HCT116 (cell line): ENCODE measurements at regions of chr9 and their contacts with region 1.

Region 1: GRCh38 chr9:17330097-17330496 is 195.3 kb downstream of the CNTLN start:
- DNase-seq: no peak
- ATAC-seq: no peak
- H3K4me3 ChIP-seq: no peak overlapping the region
- H3K27ac ChIP-seq: no peak overlapping the region
- H3K4me1 ChIP-seq: no peaks in the 10 kb centered on the region
- H3K27me3 ChIP-seq: no peaks in the 10 kb centered on the region
- CTCF ChIP-seq: no peak
- POLR2A ChIP-seq: no peak
- RAD21 ChIP-seq: no peak

Region 2: GRCh38 chr9:17272536-17272935 is 57.6 kb before region 1 on chr9:
- CTCF ChIA-PET with region 1: no interaction called
- POLR2A ChIA-PET with region 1: no interaction called
- RAD21 ChIA-PET with region 1: no interaction called
- intact Hi-C with region 1: loop called (anchors 10 kb)
- DNase-seq: no peak
- ATAC-seq: no peak
- H3K4me3 ChIP-seq: no peak overlapping the region
- H3K27ac ChIP-seq: no peak overlapping the region
- H3K4me1 ChIP-seq: no peaks in the 10 kb centered on the region
- H3K27me3 ChIP-seq: no peaks in the 10 kb centered on the region
- CTCF ChIP-seq: no peak
- POLR2A ChIP-seq: no peak
- RAD21 ChIP-seq: no peak